Astrocyte of the cerebellum (primary cell): ENCODE measurements at regions of chr1 and their contacts with region 1.

Region 1: GRCh38 chr1:20400341-20401177 is 85.5 kb downstream of the CAMK2N1 start:
- DNase-seq: no peak
- H3K4me3 ChIP-seq: no peak overlapping the region
- CTCF ChIP-seq: no peak

Region 2: GRCh38 chr1:20439282-20439681 is 38.7 kb after region 1 on chr1:
- in situ Hi-C with region 1: loop called (anchors 5 kb)
- DNase-seq: peak; percentile 11
- H3K4me3 ChIP-seq: no peak overlapping the region
- CTCF ChIP-seq: no peak